ENCODE measurements at regions of chr1 and their contacts with region 1.

Region 1: DNA sequence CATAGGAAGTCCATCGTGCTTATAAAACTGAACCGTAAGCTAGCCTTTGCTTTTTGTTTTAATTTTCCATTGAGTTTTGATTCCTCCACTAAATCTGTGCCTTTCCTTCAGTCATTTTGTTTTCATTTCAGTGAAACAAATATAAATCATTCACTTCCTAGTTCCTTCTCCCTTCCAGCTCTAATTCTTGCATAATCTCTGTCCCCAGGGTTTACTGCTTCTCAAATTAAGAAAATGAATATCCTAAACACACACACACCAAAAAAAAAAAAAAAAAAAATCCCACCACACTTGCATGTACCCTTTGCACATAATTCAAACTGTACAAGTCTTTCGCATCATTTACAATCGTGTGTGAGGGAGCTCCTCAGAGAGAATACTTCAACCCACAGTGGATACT is 6.8 kb downstream of the KCNH1 start:
- DNase-seq: no peak
- ATAC-seq: no peak
- H3K4me3 ChIP-seq: no peak overlapping the region
- H3K27ac ChIP-seq: no peak overlapping the region
- H3K4me1 ChIP-seq: no peaks in the 10 kb centered on the region
- H3K27me3 ChIP-seq: peaks cover 0 to 14% (median 11%) of the 10 kb centered on the region in 3 donors
- CTCF ChIP-seq: no peak
- POLR2A ChIP-seq: no peak

Region 2: DNA sequence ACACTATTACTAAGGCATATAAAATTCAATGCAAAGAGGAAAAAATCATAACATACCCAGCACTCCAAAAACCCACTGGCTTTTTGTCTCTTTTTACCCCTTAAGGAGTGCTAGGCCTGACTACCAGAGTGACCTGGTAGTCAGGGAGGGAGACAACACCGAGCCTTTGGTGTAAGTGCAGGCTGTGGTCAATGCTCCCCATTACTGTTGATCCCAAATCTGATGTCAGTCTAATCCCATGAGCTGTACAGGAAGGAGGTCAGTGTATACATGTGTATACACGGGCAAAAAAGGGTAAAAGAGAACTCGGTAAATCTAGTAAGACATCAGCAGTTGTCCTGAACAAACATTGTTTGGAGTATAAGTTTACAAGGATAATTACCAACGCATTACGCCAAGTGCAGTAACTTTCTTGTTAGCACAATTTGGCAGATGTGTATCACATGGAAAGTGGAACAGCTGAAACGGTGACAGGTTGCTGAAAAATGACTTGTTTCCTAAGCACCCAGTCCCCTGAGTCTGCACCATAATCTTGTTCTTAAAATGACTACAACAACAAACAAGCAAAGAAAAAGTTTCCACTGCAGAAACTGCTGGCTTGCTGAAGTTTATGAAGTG is 211.2 kb before region 1 on chr1:
- in situ Hi-C with region 1: no loop called
- intact Hi-C with region 1: loop called (anchors 10 kb)
- DNase-seq: peak in 1 of 2 donors; percentile 25
- ATAC-seq: peak in 1 of 2 donors; percentile 50
- H3K4me3 ChIP-seq: no peak overlapping the region
- H3K27ac ChIP-seq: peak overlapping the region in 1 of 4 donors; percentile 31
- H3K4me1 ChIP-seq: no peaks in the 10 kb centered on the region
- H3K27me3 ChIP-seq: no peaks in the 10 kb centered on the region
- CTCF ChIP-seq: no peak
- POLR2A ChIP-seq: no peak